ENCODE measurements at regions of chr3 and their contacts with region 1.

Region 1: GRCh38 chr3:51099794-51100535 is 285.1 kb upstream of the MANF start:
- H3K4me3 ChIP-seq: no peak overlapping the region
- H3K27ac ChIP-seq: no peak overlapping the region
- H3K4me1 ChIP-seq: no peaks in the 10 kb centered on the region
- CTCF ChIP-seq: peak; percentile 27; the same call in 1 of the 2 replicates

Region 2: DNA sequence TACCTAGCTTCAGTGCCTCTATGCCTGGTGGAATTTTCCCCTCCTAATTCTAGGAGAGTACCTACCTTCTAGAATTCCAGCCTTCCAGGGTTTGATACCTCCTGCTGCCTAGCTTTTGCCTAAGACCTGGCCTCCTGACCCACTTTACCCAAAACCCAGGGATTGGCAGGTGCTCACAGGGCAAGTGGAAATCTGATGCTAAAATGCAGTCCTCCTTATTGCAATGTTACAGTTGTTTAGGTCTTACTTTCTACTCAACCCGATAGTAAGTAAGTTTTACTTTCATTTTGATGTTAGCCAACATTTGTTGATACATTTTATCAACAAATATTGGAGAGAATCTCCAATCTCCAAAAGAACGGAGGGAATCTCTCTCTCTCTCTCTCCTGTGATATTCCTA is 149.4 kb before region 1 on chr3:
- CTCF ChIA-PET with region 1: no interaction called
- POLR2A ChIA-PET with region 1: no interaction called
- H3K4me3 ChIP-seq: no peak overlapping the region
- H3K27ac ChIP-seq: no peak overlapping the region
- H3K4me1 ChIP-seq: no peaks in the 10 kb centered on the region
- CTCF ChIP-seq: no peak

Region 3: DNA sequence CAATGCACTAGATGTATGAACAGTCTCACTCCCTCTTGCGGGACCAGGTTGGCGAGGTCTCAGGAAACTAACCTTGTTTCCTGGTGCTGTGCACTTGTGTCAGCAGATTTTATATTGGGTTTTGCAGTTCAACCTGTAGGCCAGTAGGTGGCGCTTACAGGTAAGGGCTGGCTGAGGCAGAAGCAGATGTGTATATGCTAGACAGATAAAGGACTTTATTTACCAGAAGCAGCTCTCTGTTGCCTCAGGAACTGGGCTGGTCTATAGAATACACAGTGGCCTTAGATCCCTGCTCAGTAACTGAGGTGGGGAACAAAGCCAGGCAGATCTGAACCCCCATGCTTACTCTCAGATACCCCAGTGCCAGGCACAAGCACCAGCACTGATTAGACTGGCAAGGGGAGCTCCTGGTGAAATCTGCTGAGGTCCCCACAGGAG is 128.5 kb before region 1 on chr3:
- CTCF ChIA-PET with region 1: interaction called, 12 read pairs
- POLR2A ChIA-PET with region 1: no interaction called
- H3K4me3 ChIP-seq: no peak overlapping the region
- H3K27ac ChIP-seq: no peak overlapping the region
- H3K4me1 ChIP-seq: no peaks in the 10 kb centered on the region
- CTCF ChIP-seq: no peak

Region 4: DNA sequence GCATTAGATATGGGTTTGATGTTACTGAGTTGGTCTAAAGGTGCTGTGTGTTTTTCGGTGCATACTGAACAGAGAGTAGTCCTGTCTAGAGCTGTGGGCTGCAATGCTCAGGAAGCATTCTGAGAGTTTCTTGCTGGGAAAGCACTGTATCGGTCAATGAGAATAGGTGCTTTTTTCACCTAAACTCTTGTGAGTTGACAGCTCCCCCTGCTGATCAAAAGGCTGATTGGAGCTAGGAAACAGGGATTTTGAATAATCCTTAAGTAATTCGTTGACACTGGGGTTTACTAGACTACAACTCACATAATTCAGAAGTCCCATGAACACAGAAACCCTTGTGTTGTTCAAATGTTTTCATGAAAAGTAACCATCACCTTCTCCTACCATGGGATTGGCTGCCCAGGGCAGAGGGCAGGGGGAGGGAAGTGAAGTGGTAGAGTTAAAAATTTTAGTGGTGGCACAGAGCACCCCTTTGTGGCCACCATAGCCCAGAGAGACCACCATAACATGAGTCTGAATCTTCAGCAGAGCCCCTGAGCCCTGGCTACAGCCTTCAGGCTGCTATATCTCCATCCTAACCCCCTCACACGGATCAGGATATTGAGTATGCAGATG is 272.1 kb after region 1 on chr3:
- CTCF ChIA-PET with region 1: interaction called, 36 read pairs
- POLR2A ChIA-PET with region 1: no interaction called
- H3K4me3 ChIP-seq: no peak overlapping the region
- H3K27ac ChIP-seq: no peak overlapping the region
- H3K4me1 ChIP-seq: no peaks in the 10 kb centered on the region
- CTCF ChIP-seq: peak; percentile 20; the same call in 1 of the 2 replicates

Region 5: GRCh38 chr3:51519848-51520247 is 419.9 kb after region 1 on chr3:
- CTCF ChIA-PET with region 1: no interaction called
- POLR2A ChIA-PET with region 1: no interaction called
- H3K4me3 ChIP-seq: no peak overlapping the region
- H3K27ac ChIP-seq: no peak overlapping the region
- H3K4me1 ChIP-seq: no peaks in the 10 kb centered on the region
- CTCF ChIP-seq: no peak

Measured in HEK293 (cell line).